ENCODE measurements at regions of chr7 and their contacts with region 1.

Region 1: DNA sequence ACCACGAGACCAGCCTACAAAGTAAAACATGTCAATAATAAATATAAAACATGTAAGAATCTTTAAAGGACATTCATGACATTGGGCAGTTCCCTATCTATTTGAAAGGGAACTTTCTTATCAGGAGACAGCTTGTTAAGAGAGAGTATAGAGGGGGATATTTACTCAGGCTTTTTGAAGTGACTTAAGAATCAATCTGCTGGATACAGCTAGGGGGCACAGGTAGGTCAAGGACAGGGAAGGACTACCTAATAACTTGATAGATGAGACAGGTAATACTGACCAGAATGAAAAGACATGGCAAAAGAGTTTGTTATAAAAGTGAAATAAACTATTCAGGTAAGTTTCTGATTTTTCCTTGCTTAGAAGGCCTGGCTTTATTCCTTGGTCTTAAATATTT is 21.8 kb upstream of the LRRD1 start:
- DNase-seq: no peak
- H3K4me3 ChIP-seq: no peak overlapping the region
- H3K27ac ChIP-seq: no peak overlapping the region
- H3K27me3 ChIP-seq: no peaks in the 10 kb centered on the region
- CTCF ChIP-seq: no peak

Region 2: DNA sequence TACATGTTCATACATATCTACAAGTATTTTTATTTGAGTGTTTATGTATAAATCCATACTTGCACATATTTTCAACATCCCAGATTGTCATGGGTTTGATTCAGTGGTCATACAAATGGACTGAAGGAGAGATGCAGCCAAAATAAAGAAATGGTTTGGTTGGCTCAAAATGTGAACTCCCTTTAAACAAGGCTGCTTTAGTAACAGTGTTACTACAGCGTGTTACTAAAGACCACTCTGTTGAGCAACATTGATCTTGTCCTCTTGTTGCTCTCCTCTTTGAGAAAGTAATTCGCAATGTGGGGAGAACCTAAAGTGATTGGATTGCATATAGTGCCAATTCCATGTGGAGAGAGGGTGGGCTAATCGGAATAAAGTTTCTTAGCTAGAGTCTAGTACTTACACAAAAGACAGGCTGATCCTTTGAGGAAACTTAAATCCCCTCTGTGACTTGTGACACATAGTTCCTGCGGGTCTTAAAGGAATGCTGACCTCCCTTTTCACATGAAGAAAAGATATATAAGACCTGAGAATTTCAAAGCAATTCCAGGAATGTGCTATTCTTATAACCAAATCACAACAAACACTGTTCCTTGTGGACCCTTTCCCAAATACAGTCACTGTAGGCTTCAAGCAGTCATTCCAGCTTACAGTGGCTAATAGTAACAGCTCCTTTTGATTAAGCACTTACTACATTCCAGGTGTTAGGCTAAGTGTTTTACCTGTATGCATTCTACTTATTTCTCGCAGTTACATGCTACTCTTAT is 792.2 kb before region 1 on chr7:
- intact Hi-C with region 1: no loop called
- DNase-seq: no peak
- H3K4me3 ChIP-seq: no peak overlapping the region
- H3K27ac ChIP-seq: no peak overlapping the region
- H3K27me3 ChIP-seq: peaks cover 0 to 4% (median 0%) of the 10 kb centered on the region in 45 donors
- CTCF ChIP-seq: no peak

Region 3: DNA sequence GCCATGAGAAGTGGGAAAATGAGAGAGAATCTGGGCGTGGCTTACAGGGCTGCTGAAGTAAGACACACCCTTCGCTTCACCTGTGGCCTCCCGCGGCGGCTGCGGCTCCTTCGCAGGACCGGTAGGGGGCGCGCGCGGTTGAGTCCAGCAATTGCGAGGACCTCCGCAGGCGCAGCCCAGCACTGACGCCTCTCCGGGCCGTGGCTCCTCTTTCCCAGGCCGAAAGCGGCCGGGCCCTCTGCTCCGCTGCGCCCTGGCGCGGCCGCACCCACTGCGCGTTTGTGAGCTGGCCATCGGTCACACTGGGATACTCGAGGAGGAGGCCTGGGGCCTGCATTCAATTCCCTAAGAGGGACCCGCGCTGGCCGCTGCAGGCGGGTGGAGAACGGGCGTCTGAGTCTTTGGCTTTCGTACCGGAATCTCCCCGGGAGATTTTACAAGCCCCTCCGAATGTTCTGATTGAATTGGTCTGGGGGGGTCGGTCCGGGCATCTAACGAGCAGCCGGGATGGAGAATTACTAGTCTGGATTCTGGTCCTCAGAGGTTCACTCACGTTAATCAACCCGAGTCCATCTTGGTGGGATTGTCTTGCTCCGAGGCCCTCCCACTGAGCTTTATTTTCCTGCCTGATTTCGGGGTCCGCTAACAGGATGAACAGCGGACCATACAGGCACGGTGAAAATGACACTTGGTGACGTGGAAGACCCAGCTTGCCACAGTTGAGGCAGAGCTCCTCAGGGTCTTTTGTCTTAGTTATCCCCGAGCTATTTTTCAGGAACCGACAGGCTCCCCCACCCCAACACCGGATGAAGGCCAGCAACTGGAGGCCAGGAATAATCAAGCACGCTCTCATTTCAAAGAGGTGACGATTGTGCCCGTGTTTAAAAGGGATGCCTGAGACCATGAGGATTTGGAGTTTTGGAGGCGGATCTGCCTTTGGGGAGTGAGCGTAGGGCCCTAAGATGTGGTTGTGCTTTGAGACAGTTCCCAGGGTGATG is 21.6 kb before region 1 on chr7 and contains the start of gene LRRD1:
- intact Hi-C with region 1: loop called in 1 of 2 experiments (anchors 1 kb)
- DNase-seq: peak; percentile 79 to 94 (median 87)
- H3K4me3 ChIP-seq: peak within 1 kb of the TSS; percentile 52 to 88 (median 73)
- H3K27ac ChIP-seq: peak within 1 kb of the TSS; percentile 13 to 98 (median 90)
- H3K27me3 ChIP-seq: no peaks in the 10 kb centered on the region
- CTCF ChIP-seq: peak; percentile 86 to 100 (median 98)
- total RNA-seq, gene LRRD1: 0.21 to 4.2 (median 0.92) TPM in 117 of 120 experiments, not detected in the others